HCT116 (cell line): ENCODE measurements at regions of chr5 and their contacts with region 1.

Region 1: DNA sequence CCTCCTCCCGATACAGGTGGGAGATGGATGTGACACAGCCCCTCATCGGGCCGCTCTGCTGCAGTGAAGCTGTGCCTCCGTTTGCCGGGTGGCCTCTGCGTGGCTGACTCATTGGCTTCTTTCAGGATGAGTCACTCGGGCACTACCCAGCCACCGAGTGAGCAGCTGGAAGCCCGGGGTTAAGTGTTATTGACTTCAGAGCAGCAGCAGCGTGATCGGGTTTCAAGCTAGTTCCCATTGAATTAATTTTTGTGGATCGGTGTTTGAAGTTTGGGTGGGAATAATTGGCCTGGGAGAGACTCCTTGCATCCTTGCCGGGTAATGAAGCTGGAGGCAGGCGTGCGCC is 266.4 kb upstream of the IRX4 start:
- DNase-seq: peak; percentile 31
- ATAC-seq: peak; percentile 92
- H3K4me3 ChIP-seq: peak overlapping the region in 1 of 2 experiments; percentile 22; a peak in 2 of 4 replicates
- H3K27ac ChIP-seq: no peak overlapping the region
- H3K4me1 ChIP-seq: peaks cover 19 to 22% of the 10 kb centered on the region in 2 experiments
- H3K27me3 ChIP-seq: peaks cover 16% of the 10 kb centered on the region; the same call in 1 of the 2 replicates
- CTCF ChIP-seq: no peak
- POLR2A ChIP-seq: no peak
- RAD21 ChIP-seq: no peak

Region 2: DNA sequence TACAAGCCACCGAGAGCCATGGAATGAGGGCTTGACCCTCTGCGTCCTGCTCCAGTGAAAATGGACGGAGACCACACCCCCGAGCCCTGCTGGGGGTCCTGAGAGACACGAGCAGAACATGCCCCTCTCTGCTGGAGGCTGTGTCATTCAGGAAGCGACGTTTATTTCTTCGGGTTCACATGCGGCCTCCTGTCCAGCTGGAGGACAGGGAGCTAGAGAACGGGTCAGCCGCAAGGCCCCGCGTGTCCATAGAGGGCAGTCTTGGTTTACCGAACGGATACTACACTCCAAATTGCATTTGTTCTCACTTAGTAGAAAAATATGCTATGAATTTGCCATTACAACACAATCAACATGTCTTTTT is 385.6 kb before region 1 on chr5:
- CTCF ChIA-PET with region 1: interaction called, 9 read pairs
- POLR2A ChIA-PET with region 1: no interaction called
- RAD21 ChIA-PET with region 1: no interaction called
- intact Hi-C with region 1: loop called (anchors 2 kb)
- DNase-seq: peak; percentile 38
- ATAC-seq: peak; percentile 91
- H3K4me3 ChIP-seq: no peak overlapping the region
- H3K27ac ChIP-seq: no peak overlapping the region
- H3K4me1 ChIP-seq: no peaks in the 10 kb centered on the region
- H3K27me3 ChIP-seq: no peaks in the 10 kb centered on the region
- CTCF ChIP-seq: peak; percentile 62 to 89 (median 82); a peak in 5 of 6 replicates
- POLR2A ChIP-seq: no peak
- RAD21 ChIP-seq: peak; percentile 81

Region 3: DNA sequence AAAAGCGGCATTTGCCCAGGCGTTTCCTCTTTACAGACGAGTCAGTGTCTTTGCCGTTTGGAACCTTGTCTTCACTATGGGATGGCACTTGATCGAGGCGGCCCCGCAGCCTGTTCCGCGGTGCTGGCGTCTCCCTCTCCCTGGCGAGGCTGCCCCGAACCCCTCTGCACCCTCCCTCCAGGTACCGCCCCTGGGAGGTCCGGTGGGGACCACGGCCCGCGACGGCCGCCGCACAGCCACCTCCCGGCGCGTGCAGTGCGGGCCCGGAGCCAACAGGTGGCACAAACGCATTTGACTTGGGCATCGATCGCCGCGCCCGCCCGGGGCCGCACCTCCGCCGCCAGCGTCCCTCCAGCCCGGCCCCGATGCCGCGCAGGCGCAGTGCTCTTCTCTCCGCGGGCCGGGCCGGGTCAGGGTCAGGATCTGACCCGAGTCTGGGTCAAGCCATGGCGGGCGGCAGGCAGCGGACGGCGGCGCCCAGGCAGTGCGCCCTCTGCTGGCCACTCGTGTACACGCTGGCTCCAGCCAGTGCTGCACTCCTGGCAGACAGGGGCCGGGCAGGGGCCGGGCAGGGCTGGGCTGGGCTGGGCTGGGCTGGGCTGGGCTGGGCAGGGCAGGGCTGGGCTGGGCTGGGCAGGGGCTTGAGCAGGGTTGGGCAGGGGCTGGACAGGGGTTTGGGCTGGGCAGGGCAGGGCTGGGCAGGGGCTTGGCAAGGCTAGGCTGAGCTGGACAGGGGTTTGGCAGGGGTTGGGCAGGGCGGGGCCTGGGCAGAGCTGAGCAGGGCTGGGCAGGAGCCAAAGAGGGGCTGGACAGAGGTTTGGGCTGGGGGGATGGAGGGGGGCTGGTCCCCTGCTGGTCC is 110.6 kb before region 1 on chr5:
- CTCF ChIA-PET with region 1: interaction called, 5 read pairs
- POLR2A ChIA-PET with region 1: no interaction called
- RAD21 ChIA-PET with region 1: no interaction called
- intact Hi-C with region 1: loop called (anchors 1 kb)
- DNase-seq: peak; percentile 33
- ATAC-seq: peak; percentile 98
- H3K4me3 ChIP-seq: peak overlapping the region in 1 of 2 experiments; percentile 34; a peak in 1 of 4 replicates
- H3K27ac ChIP-seq: no peak overlapping the region
- H3K4me1 ChIP-seq: peaks cover 5 to 7% of the 10 kb centered on the region in 2 experiments; a peak in 3 of 4 replicates
- H3K27me3 ChIP-seq: peaks cover 43% of the 10 kb centered on the region
- CTCF ChIP-seq: peak; percentile 75 to 96 (median 79)
- POLR2A ChIP-seq: no peak
- RAD21 ChIP-seq: peak; percentile 60

Region 4: DNA sequence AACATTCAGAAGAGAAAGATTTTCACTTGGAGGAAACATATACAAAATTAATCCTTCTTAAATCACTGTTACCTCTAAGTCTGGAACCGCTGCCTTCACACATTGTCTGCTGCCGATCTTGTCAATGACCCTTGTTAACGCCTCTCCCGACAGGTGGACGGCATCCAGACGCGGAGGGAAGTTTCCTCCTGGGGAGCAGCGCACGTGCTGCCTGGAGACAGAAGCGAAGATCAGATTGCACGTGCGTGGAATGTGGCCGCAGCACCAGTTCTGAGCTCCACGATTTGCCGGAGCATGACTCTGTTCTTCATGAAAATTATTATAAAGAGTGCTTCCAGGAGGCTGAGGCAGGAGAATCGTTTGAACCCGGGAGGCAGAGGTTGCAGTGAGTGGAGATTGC is 82.8 kb before region 1 on chr5:
- CTCF ChIA-PET with region 1: no interaction called
- POLR2A ChIA-PET with region 1: no interaction called
- RAD21 ChIA-PET with region 1: no interaction called
- intact Hi-C with region 1: loop called (anchors 1 kb)
- DNase-seq: no peak
- ATAC-seq: no peak
- H3K4me3 ChIP-seq: no peak overlapping the region
- H3K27ac ChIP-seq: no peak overlapping the region
- H3K4me1 ChIP-seq: no peaks in the 10 kb centered on the region
- H3K27me3 ChIP-seq: peaks cover 33% of the 10 kb centered on the region
- CTCF ChIP-seq: no peak
- POLR2A ChIP-seq: no peak
- RAD21 ChIP-seq: no peak